WTC11 (cell line): ENCODE measurements at regions of chr5 and their contacts with region 1.

Region 1: DNA sequence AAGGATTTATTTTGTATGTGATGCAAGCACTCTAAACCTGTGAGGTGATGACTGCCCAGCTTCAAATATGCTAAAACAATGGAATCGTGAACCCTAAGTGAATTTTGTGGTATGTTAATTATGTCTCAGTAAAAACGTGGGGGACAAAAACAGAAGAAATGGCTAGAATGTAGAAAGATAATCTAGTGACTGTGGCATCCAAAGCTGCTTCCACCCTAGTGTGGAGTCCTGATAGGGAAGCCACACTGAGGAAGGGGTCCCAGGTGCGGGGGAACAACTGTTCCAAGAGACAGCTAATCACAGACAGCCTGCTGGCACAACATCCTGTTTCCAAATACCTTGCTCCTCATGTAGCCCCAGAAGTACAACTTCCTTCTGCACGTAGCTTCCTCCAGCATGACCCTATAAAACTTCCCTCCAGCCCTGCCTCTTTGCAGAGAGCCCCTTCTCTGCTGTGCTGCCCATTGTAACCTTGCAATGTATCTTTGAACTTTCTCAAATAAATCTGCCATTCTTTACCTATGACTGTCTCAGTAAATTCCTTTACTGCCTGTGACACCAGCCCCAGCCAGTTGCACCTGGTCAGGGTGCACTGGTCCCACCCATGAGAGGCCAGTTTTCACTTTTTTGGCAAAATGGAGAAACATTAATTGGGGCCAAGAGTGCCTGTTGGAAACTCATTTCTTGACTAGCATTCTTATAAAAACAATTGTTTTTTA is 4.9 kb downstream of the GMCL2 start:
- DNase-seq: no peak
- ATAC-seq: no peak
- H3K4me3 Mint-ChIP-seq: no peak overlapping the region; the same call in 1 of the 2 replicates
- H3K27ac Mint-ChIP-seq: peak overlapping the region; percentile 85
- H3K4me1 Mint-ChIP-seq: peaks cover 43% of the 10 kb centered on the region
- H3K27me3 Mint-ChIP-seq: no peaks in the 10 kb centered on the region
- CTCF ChIP-seq: no peak

Region 2: GRCh38 chr5:178137991-178138390 is 44.3 kb before region 1 on chr5:
- CTCF ChIA-PET with region 1: no interaction called
- POLR2A ChIA-PET with region 1: no interaction called
- DNase-seq: no peak
- ATAC-seq: no peak
- H3K4me3 Mint-ChIP-seq: no peak overlapping the region
- H3K27ac Mint-ChIP-seq: no peak overlapping the region
- H3K4me1 Mint-ChIP-seq: peaks cover 18% of the 10 kb centered on the region
- H3K27me3 Mint-ChIP-seq: no peaks in the 10 kb centered on the region
- CTCF ChIP-seq: no peak

Region 3: DNA sequence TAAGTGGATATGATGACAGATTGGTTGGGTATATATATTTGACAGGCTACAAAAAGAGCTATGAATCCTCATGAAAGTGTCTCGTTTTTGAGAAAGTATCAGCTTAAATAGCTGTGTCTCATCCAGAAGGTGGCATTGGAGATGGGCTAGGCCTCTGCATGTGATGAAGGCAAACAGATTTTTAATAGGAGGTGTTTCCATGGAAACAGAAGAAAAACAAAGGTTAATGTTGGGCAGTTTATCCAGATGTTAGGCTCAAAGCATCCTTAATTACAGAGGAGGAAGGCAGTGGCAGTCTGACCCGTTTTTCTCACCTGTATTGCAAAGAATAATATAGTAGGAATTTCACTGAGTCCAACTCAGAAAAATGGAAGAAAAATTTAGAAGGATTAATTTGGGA is 11.3 kb before region 1 on chr5:
- CTCF ChIA-PET with region 1: interaction called, 5 read pairs
- POLR2A ChIA-PET with region 1: interaction called, 13 read pairs
- DNase-seq: no peak
- ATAC-seq: no peak
- H3K4me3 Mint-ChIP-seq: no peak overlapping the region
- H3K27ac Mint-ChIP-seq: no peak overlapping the region
- H3K4me1 Mint-ChIP-seq: peaks cover 21% of the 10 kb centered on the region
- H3K27me3 Mint-ChIP-seq: no peaks in the 10 kb centered on the region; the same call in 1 of the 2 replicates
- CTCF ChIP-seq: no peak

Region 4: GRCh38 chr5:178196986-178197385 is 14.7 kb after region 1 on chr5:
- CTCF ChIA-PET with region 1: interaction called, 55 read pairs
- POLR2A ChIA-PET with region 1: interaction called, 6 read pairs
- DNase-seq: peak; percentile 60
- ATAC-seq: peak; percentile 76
- H3K4me3 Mint-ChIP-seq: no peak overlapping the region
- H3K27ac Mint-ChIP-seq: no peak overlapping the region
- H3K4me1 Mint-ChIP-seq: peaks cover 23% of the 10 kb centered on the region
- H3K27me3 Mint-ChIP-seq: peaks cover 18% of the 10 kb centered on the region
- CTCF ChIP-seq: peak; percentile 44

Region 5: GRCh38 chr5:178204182-178204894 is 22.0 kb after region 1 on chr5 and contains the start of gene HNRNPAB:
- CTCF ChIA-PET with region 1: interaction called, 13 read pairs
- POLR2A ChIA-PET with region 1: interaction called, 67 read pairs
- DNase-seq: peak; percentile 96
- ATAC-seq: peak; percentile 88
- H3K4me3 Mint-ChIP-seq: peak within 1 kb of the TSS; percentile 96
- H3K27ac Mint-ChIP-seq: peak within 1 kb of the TSS; percentile 98
- H3K4me1 Mint-ChIP-seq: peaks cover 28% of the 10 kb centered on the region
- H3K27me3 Mint-ChIP-seq: peaks cover 13% of the 10 kb centered on the region
- CTCF ChIP-seq: no peak
- total RNA-seq, gene HNRNPAB: 414 to 457 TPM (median 419 TPM) in 3 replicates

Region 6: DNA sequence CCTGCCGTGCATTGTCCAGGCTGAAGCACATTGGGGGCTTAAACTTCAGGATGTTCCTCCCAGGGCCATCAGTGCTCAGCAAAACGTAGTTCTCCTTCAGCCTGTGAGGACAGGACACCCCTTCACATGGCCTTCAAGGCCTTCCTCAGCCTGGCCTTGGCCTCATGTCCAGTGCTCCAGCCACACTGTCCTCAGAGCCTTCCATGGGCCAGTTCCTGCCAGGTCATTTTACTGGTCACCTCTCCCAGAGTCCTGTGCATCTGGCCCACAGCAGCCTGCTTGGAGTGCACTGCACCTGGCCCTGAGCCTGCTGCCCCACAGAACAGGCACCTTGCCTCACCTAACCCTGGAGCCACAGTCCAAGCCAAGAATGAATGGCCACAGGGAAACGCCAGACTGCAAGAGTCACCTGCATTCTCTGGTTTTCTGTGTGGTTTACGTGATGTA is 30.7 kb after region 1 on chr5:
- CTCF ChIA-PET with region 1: interaction called, 6 read pairs
- POLR2A ChIA-PET with region 1: interaction called, 10 read pairs
- DNase-seq: no peak
- ATAC-seq: no peak
- H3K4me3 Mint-ChIP-seq: no peak overlapping the region
- H3K27ac Mint-ChIP-seq: no peak overlapping the region
- H3K4me1 Mint-ChIP-seq: peaks cover 13% of the 10 kb centered on the region
- H3K27me3 Mint-ChIP-seq: no peaks in the 10 kb centered on the region
- CTCF ChIP-seq: no peak